Aorta (tissue), 5 donors: ENCODE measurements at regions of chr11 and their contacts with region 1.

Region 1: DNA sequence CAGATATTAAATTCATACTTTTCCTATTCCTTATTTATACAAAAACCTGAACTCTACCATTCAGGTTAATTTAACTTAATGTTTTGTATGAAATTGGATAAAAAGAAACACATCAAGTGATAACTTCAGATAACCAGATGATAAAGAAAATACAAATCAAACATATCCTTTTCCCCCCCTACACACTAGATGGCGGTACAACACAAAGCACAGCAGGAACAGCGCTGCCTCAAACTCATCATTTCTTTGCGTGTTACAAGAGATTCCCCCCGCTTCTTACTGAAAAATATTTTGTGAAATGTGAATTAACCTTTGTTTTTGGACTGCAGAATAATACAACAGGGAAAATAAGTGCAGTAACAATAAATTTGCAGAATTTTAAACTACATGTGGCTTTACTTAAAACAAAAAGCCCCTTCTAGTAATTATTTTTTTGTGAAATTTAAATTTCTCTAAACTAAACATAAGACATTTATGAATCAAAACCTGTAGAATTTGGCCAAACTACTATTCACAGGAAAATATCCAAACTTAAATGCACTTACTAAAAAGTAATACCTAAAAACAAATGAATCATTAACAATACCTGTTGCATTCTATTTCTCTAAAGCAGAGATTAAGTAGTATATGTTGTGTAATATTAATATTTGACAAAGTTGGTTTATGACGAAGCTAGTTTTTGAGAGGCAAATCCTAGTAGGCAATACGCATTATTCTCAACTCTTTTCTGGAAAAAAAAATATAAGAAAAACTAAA is 74.4 kb downstream of the ARHGAP32 start:
- DNase-seq: no peak
- ATAC-seq: no peak
- H3K4me3 ChIP-seq: no peak overlapping the region
- H3K27ac ChIP-seq: no peak overlapping the region
- H3K4me1 ChIP-seq: no peaks in the 10 kb centered on the region
- H3K27me3 ChIP-seq: no peaks in the 10 kb centered on the region

Region 2: DNA sequence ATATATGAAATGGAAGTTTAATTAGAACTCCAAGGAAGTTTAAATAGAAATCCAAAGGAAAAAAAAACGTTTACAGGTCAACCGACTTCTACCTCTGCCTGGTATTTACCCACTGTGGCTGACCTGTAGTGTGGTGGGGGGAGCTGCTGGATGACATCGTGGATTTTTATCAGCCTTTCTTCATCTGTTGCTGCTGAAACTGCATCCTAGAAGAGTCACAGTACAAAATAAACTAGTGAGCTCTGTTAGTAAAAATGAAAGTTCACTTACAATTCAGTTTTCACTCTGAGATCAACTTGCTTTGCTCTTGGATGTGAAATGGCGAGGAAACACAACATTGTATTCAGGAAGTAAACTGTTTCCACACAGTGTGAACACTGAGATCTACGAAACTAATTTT is 131.9 kb before region 1 on chr11:
- intact Hi-C with region 1: no loop called
- DNase-seq: no peak
- ATAC-seq: no peak
- H3K4me3 ChIP-seq: no peak overlapping the region
- H3K27ac ChIP-seq: no peak overlapping the region
- H3K4me1 ChIP-seq: no peaks in the 10 kb centered on the region
- H3K27me3 ChIP-seq: no peaks in the 10 kb centered on the region

Region 3: GRCh38 chr11:129090056-129090455 is 27.7 kb before region 1 on chr11:
- intact Hi-C with region 1: no loop called
- DNase-seq: no peak
- ATAC-seq: no peak
- H3K4me3 ChIP-seq: no peak overlapping the region
- H3K27ac ChIP-seq: no peak overlapping the region
- H3K4me1 ChIP-seq: no peaks in the 10 kb centered on the region
- H3K27me3 ChIP-seq: no peaks in the 10 kb centered on the region

Region 4: GRCh38 chr11:129331871-129332274 is 214.1 kb after region 1 on chr11:
- intact Hi-C with region 1: loop called (anchors 2 to 5 kb)
- DNase-seq: peak; percentile 83 to 93
- ATAC-seq: peak; percentile 86
- H3K4me3 ChIP-seq: no peak overlapping the region
- H3K27ac ChIP-seq: no peak overlapping the region
- H3K4me1 ChIP-seq: no peaks in the 10 kb centered on the region
- H3K27me3 ChIP-seq: no peaks in the 10 kb centered on the region

Region 5: GRCh38 chr11:129750349-129751292 is 632.8 kb after region 1 on chr11:
- intact Hi-C with region 1: loop called in 1 of 2 experiments (anchors 5 kb)
- DNase-seq: peak; percentile 77 to 90
- ATAC-seq: peak; percentile 96
- H3K4me3 ChIP-seq: no peak overlapping the region
- H3K27ac ChIP-seq: no peak overlapping the region
- H3K4me1 ChIP-seq: no peaks in the 10 kb centered on the region
- H3K27me3 ChIP-seq: no peaks in the 10 kb centered on the region